ENCODE measurements at regions of chr2 and their contacts with region 1.

Region 1: DNA sequence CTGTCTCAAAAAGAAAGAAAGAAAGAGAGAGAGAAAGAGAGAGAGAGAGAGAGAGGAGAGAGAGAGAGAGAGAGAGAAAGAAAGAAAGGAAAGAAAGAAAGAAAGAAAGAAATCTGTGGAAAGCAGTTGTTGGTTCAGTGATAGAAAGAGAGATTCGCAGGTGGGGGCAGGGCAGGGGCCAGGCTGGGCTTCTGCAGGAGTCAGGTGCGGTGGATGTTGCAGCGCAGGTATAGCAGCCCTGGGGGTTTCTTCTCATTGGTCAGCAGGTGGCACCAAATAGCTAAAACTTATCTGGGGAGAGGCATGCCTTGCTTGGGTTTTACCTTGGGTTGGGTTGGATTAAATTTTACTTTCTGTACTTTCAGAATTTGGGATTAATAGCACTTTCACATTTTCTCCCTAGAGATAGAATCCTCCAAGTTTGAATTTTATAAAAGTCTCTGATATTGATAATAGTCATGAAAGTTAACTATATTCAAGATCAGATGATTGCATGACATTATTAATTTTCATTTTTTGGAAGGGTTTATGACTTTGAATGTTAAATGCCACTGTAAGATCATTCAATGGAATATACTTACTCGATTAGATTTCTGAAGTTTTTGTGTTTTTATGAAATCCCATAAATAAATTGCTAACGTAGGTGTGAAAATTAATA is 66.6 kb downstream of the SPTBN1 start:
- DNase-seq: peak; percentile 92
- H3K4me3 Mint-ChIP-seq: no peak overlapping the region
- H3K27ac Mint-ChIP-seq: no peak overlapping the region
- H3K4me1 Mint-ChIP-seq: peaks cover 27% of the 10 kb centered on the region
- H3K27me3 Mint-ChIP-seq: no peaks in the 10 kb centered on the region
- CTCF ChIP-seq: peak; percentile 67

Region 2: GRCh38 chr2:54106631-54107454 is 415.9 kb before region 1 on chr2:
- CTCF ChIA-PET with region 1: interaction called, 46 read pairs
- POLR2A ChIA-PET with region 1: interaction called, 3 read pairs
- intact Hi-C with region 1: loop called (anchors 5 kb)
- DNase-seq: peak; percentile 68
- H3K4me3 Mint-ChIP-seq: no peak overlapping the region
- H3K27ac Mint-ChIP-seq: no peak overlapping the region
- H3K4me1 Mint-ChIP-seq: peaks cover 6% of the 10 kb centered on the region
- H3K27me3 Mint-ChIP-seq: no peaks in the 10 kb centered on the region
- CTCF ChIP-seq: peak; percentile 64

Region 3: DNA sequence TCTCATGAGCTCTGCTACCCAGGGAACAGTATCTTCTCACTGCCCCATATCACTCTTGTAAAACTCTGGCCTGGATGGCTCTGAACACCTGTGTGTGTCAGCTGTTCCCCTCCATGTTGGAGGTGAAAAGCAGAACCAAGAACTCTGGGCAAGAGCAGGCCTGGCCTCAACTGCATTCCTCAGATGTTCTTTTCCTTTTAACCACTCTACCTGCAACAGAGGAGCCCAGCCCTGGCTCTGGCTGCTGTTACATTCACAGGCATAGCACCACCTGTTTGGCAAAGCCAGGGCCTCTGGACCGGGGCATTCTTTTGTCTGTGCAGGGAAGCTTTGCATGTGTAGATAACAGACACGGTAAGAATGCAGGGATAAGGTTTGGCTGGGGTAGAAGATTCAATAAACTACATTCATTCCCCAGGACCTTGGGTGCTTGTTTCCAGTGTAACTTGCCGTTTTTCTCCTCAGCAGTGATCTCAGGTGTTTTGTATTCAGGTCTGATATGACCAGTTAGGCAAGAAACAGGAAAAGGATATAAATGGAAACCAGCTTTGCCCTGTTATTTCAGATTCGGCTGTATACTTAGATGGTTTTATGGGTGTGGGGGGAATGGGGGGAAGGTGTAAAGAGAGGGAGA is 28.5 kb after region 1 on chr2:
- CTCF ChIA-PET with region 1: interaction called, 11 read pairs
- POLR2A ChIA-PET with region 1: interaction called, 18 read pairs
- intact Hi-C with region 1: no loop called
- DNase-seq: no peak
- H3K4me3 Mint-ChIP-seq: no peak overlapping the region
- H3K27ac Mint-ChIP-seq: no peak overlapping the region
- H3K4me1 Mint-ChIP-seq: peaks cover 34% of the 10 kb centered on the region
- H3K27me3 Mint-ChIP-seq: no peaks in the 10 kb centered on the region
- CTCF ChIP-seq: no peak

Region 4: GRCh38 chr2:54613794-54614257 is 91.1 kb after region 1 on chr2:
- CTCF ChIA-PET with region 1: interaction called, 8 read pairs
- POLR2A ChIA-PET with region 1: interaction called, 3 read pairs
- intact Hi-C with region 1: loop called (anchors 5 kb)
- DNase-seq: peak; percentile 64
- H3K4me3 Mint-ChIP-seq: no peak overlapping the region
- H3K27ac Mint-ChIP-seq: peak overlapping the region; percentile 90
- H3K4me1 Mint-ChIP-seq: peaks cover 19% of the 10 kb centered on the region
- H3K27me3 Mint-ChIP-seq: no peaks in the 10 kb centered on the region
- CTCF ChIP-seq: no peak

Region 5: GRCh38 chr2:54624591-54625071 is 101.9 kb after region 1 on chr2:
- CTCF ChIA-PET with region 1: interaction called, 10 read pairs
- POLR2A ChIA-PET with region 1: interaction called, 3 read pairs
- intact Hi-C with region 1: no loop called
- DNase-seq: no peak
- H3K4me3 Mint-ChIP-seq: no peak overlapping the region
- H3K27ac Mint-ChIP-seq: no peak overlapping the region
- H3K4me1 Mint-ChIP-seq: peaks cover 9% of the 10 kb centered on the region
- H3K27me3 Mint-ChIP-seq: no peaks in the 10 kb centered on the region
- CTCF ChIP-seq: no peak

Region 6: DNA sequence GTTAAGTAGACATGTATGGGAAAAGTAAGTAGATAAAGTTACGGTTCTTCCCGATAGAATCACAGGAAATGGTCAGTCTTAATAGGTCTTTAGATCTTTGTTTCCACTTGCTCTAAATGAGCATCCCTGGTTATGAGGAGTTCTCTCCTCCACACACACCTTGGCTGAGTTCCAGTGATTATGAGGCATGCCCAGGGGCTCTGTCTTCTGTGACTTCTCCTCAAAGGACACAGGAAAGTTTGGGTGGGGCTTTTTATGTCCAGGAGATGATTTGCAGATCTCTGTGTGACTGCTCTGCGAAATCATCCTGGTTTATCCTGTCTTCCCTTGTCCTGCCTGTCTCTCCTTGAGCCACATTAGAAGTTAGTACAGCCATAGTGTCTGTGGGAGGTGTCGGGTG is 116.9 kb after region 1 on chr2:
- CTCF ChIA-PET with region 1: interaction called, 6 read pairs
- POLR2A ChIA-PET with region 1: no interaction called
- intact Hi-C with region 1: loop called (anchors 5 kb)
- DNase-seq: no peak
- H3K4me3 Mint-ChIP-seq: no peak overlapping the region
- H3K27ac Mint-ChIP-seq: no peak overlapping the region
- H3K4me1 Mint-ChIP-seq: peaks cover 15% of the 10 kb centered on the region
- H3K27me3 Mint-ChIP-seq: no peaks in the 10 kb centered on the region
- CTCF ChIP-seq: no peak

Region 7: GRCh38 chr2:54657664-54658083 is 134.9 kb after region 1 on chr2:
- CTCF ChIA-PET with region 1: interaction called, 29 read pairs
- POLR2A ChIA-PET with region 1: no interaction called
- intact Hi-C with region 1: loop called (anchors 5 kb)
- DNase-seq: peak; percentile 67
- H3K4me3 Mint-ChIP-seq: no peak overlapping the region
- H3K27ac Mint-ChIP-seq: no peak overlapping the region
- H3K4me1 Mint-ChIP-seq: no peaks in the 10 kb centered on the region
- H3K27me3 Mint-ChIP-seq: no peaks in the 10 kb centered on the region
- CTCF ChIP-seq: peak; percentile 61

Region 8: DNA sequence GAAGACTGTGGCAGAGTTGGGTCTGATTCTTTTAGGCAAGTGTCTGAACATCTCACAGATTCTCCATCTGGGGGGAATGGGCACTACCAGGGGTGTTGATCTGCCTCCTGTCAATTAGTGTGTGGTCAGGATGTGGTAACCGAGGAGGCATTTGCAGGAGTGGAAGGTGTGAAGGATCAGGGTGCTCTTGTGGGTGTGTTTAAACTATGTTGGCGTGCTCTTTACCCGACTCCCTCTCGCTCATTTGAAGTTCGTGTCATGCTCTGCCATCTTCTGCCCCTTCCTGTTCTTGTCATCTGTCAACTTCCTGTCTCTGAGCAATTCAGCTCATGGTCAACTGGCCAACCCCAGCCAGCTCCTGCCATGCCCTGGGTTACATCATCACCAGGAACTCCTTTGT is 419.6 kb after region 1 on chr2:
- CTCF ChIA-PET with region 1: no interaction called
- POLR2A ChIA-PET with region 1: no interaction called
- intact Hi-C with region 1: no loop called
- DNase-seq: no peak
- H3K4me3 Mint-ChIP-seq: no peak overlapping the region
- H3K27ac Mint-ChIP-seq: no peak overlapping the region
- H3K4me1 Mint-ChIP-seq: peaks cover 13% of the 10 kb centered on the region
- H3K27me3 Mint-ChIP-seq: no peaks in the 10 kb centered on the region
- CTCF ChIP-seq: no peak

Measured in MCF 10A (cell line).